ENCODE measurements at regions of chr14 and their contacts with region 1.

Region 1: GRCh38 chr14:103104654-103105452 is 10.3 kb downstream of the EXOC3L4 start:
- H3K4me3 ChIP-seq: no peak overlapping the region
- H3K27ac ChIP-seq: no peak overlapping the region
- H3K4me1 ChIP-seq: no peaks in the 10 kb centered on the region
- CTCF ChIP-seq: peak; percentile 100

Region 2: GRCh38 chr14:103078093-103078749 is 26.6 kb before region 1 on chr14:
- CTCF ChIA-PET with region 1: interaction called, 37 read pairs
- POLR2A ChIA-PET with region 1: no interaction called
- H3K4me3 ChIP-seq: no peak overlapping the region
- H3K27ac ChIP-seq: no peak overlapping the region
- H3K4me1 ChIP-seq: 0 out of 2 replicates have a peak, but pooled peaks cover 3% of the 10 kb centered on the region
- CTCF ChIP-seq: peak; percentile 80

Region 3: GRCh38 chr14:103121846-103122584 is 17.2 kb after region 1 on chr14:
- CTCF ChIA-PET with region 1: interaction called, 22 read pairs
- POLR2A ChIA-PET with region 1: no interaction called
- H3K4me3 ChIP-seq: no peak overlapping the region
- H3K27ac ChIP-seq: peak overlapping the region; percentile 85
- H3K4me1 ChIP-seq: peaks cover 10% of the 10 kb centered on the region
- CTCF ChIP-seq: no peak

Region 4: DNA sequence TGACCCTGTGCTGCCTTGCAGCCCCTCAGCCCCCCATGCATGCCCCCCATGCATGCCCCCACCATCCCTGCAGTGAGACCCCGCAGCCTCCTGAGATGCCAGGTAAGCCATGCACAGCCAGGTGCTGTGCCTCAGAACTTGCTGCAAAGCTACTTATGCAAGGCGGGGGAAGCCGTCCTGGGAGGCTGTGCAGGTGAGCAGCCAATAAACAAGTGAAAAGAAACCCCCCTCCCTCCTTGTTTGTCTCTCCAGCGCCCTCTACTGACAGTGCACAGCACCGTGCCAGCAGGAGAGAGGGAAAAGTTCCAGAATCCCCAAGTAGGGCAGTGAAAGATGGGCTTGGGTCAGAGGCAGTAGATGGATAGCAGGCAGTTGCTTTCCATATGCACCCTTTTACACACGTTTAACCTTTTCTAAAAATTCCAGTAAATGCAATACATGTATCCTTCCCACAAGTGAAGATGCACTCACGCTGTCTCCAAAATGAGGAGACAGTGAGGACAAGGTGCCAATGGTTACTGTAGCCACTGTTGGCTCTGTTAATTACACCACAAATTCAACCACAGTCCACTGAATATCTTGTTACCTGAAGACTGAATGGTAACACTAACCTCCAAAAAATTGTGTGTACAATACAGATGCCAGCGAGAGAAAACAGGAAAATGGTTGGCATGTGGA is 36.4 kb after region 1 on chr14:
- CTCF ChIA-PET with region 1: interaction called, 80 read pairs
- POLR2A ChIA-PET with region 1: no interaction called
- H3K4me3 ChIP-seq: no peak overlapping the region
- H3K27ac ChIP-seq: no peak overlapping the region
- H3K4me1 ChIP-seq: no peaks in the 10 kb centered on the region
- CTCF ChIP-seq: peak; percentile 58

Region 5: GRCh38 chr14:103185051-103185992 is 80.5 kb after region 1 on chr14:
- CTCF ChIA-PET with region 1: interaction called, 55 read pairs
- POLR2A ChIA-PET with region 1: no interaction called
- H3K4me3 ChIP-seq: no peak overlapping the region
- H3K27ac ChIP-seq: no peak overlapping the region
- H3K4me1 ChIP-seq: no peaks in the 10 kb centered on the region
- CTCF ChIP-seq: no peak

Region 6: GRCh38 chr14:103292426-103293374 is 187.8 kb after region 1 on chr14:
- CTCF ChIA-PET with region 1: interaction called, 74 read pairs
- POLR2A ChIA-PET with region 1: no interaction called
- H3K4me3 ChIP-seq: no peak overlapping the region
- H3K27ac ChIP-seq: no peak overlapping the region
- H3K4me1 ChIP-seq: no peaks in the 10 kb centered on the region
- CTCF ChIP-seq: peak; percentile 89

Measured in HEK293 (cell line).